Activated CD4-positive, alpha-beta T cell treated with anti-CD3 and anti-CD28 coated beads for 36 hours (primary cell): ENCODE measurements at regions of chr2 and their contacts with region 1.

Region 1: DNA sequence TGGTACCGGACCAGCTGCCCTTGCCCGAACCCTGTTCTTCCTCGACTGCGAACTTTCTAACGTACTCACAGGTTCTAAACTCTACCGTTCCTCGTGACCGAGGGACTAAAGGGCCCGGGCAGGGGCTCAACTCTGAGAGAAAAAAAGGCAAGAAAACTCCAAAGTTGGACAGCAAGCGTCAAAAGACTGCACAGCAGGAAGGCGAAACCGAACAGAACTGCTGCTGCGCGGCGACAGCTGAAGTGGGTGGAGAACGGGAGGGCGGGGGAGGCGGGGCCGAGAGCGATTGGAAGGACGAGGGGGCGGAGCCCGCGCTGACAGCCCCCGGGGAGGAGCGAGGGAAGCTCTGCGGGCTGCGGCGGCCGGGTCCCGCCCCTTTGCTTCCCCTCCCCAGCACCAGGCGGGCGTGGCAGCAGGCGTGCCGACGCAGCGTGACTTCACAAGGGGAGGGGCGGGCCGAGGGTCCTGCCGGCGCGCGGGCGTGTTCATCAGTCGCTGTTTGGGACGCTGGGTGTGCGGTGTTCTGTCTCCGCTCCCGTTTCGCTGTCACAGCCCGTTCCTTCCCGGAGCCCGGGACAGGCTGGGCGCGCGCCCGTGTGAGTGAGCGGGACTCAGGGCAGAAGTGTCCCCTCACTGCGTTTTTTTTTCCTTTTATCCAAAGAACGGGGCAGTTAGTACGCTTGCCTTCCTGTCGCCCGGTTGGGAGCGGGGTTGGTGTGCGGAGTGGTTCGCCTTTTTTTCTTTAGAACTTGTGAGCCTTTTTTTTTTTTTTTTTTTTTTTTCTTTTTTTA is at the start of gene NABP1:
- DNase-seq: peak; percentile 100
- ATAC-seq: peak; percentile 79
- H3K4me3 Mint-ChIP-seq: peak within 1 kb of the TSS; percentile 97
- H3K27ac Mint-ChIP-seq: peak within 1 kb of the TSS; percentile 99
- H3K4me1 Mint-ChIP-seq: peaks cover 45% of the 10 kb centered on the region
- H3K27me3 Mint-ChIP-seq: no peaks in the 10 kb centered on the region
- total RNA-seq, gene NABP1: 52.4 to 53.9 TPM

Region 2: DNA sequence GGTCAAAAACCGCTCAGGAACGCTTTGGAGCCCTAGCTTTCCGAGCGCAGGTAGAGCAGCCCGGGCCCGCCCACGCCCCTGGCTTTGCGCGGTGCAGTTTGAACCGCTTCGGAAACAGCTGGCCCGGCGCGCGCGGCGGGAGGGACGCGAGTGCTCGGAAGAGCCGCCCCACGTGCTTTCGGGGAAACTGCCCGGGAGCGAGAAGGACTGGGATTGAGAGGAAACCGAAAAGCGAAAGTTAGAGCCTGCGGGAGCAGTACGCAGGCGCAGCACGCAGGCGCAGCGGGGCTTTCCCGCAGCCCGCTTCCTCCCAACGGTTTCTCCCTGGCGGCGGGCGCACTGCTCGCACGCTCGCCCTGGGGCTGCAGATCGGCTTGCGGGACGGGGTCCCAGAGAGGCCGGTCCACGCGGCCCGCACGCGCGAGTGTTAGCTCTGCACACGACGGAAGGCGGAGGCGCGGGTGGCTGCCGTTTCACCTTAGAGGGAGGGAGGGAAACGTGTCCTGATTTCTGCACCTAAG is 657.6 kb before region 1 on chr2:
- CTCF ChIA-PET with region 1: no interaction called
- POLR2A ChIA-PET with region 1: no interaction called
- intact Hi-C with region 1: loop called (anchors 2 to 5 kb)
- DNase-seq: peak; percentile 96
- ATAC-seq: peak; percentile 62
- H3K4me3 Mint-ChIP-seq: no peak overlapping the region
- H3K27ac Mint-ChIP-seq: no peak overlapping the region
- H3K4me1 Mint-ChIP-seq: peaks cover 37% of the 10 kb centered on the region
- H3K27me3 Mint-ChIP-seq: no peaks in the 10 kb centered on the region

Region 3: DNA sequence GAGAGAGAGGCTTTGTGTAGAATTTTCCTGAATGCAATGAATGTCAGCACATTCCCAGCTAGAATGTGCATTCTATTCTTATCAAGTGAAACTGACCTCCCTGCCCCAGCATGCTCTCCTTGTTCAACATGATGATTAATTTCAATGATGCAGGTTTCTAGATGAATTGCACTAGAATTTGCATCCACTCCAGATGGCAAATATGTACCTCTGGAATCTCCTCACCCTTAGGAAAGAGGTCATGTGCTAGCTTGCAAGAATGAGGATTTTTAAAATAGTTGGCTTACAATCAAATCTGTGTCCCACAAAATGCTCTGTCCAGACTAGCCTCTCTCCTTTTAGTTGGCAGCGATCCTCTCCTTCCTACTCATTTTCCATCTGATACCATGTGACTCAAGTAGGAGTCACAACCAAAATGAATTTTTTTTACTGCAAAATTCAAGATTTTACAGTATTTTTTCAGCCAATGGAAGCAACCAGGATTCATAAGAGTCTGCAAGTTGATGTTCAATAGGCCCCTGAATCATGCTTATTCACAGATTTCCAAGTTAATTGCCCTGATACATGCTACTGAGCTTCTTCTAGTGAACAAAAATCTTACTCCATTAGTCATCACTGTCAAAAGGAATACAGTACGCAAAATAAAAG is 506.0 kb before region 1 on chr2:
- CTCF ChIA-PET with region 1: no interaction called
- POLR2A ChIA-PET with region 1: interaction called, 4 read pairs
- intact Hi-C with region 1: loop called in 1 of 2 experiments (anchors 5 kb)
- DNase-seq: peak; percentile 48
- ATAC-seq: peak; percentile 56
- H3K4me3 Mint-ChIP-seq: no peak overlapping the region
- H3K27ac Mint-ChIP-seq: peak overlapping the region; percentile 60
- H3K4me1 Mint-ChIP-seq: peaks cover 78% of the 10 kb centered on the region
- H3K27me3 Mint-ChIP-seq: no peaks in the 10 kb centered on the region

Region 4: GRCh38 chr2:191573216-191573615 is 104.6 kb before region 1 on chr2:
- CTCF ChIA-PET with region 1: interaction called, 3 read pairs
- POLR2A ChIA-PET with region 1: interaction called, 4 read pairs
- intact Hi-C with region 1: loop called (anchors 1 to 2 kb)
- DNase-seq: no peak
- ATAC-seq: peak; percentile 52
- H3K4me3 Mint-ChIP-seq: no peak overlapping the region
- H3K27ac Mint-ChIP-seq: peak overlapping the region; percentile 85
- H3K4me1 Mint-ChIP-seq: peaks cover 49% of the 10 kb centered on the region
- H3K27me3 Mint-ChIP-seq: no peaks in the 10 kb centered on the region

Region 5: DNA sequence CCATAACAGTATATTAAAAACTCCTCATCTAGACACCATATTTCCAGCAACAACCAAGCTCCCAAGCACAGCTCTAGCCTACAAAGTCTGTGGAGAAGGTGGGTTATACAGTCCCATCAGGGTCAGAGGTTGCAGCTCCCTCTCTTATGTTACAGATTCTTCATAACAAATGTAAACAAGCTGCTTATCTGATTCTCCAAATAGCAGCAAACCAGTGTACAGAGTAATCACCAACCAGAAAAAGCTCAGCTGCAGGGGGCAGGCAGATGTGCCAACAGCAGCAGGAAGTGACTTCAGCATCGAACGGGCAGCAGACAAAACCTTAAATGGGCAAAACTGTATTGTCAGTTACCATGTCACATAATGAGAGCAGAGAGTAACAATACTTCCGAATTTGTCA is 52.8 kb before region 1 on chr2:
- CTCF ChIA-PET with region 1: interaction called, 4 read pairs
- POLR2A ChIA-PET with region 1: interaction called, 6 read pairs
- intact Hi-C with region 1: loop called in 1 of 2 experiments (anchors 1 kb)
- DNase-seq: peak; percentile 64
- ATAC-seq: peak; percentile 57
- H3K4me3 Mint-ChIP-seq: no peak overlapping the region
- H3K27ac Mint-ChIP-seq: peak overlapping the region; percentile 86
- H3K4me1 Mint-ChIP-seq: peaks cover 69% of the 10 kb centered on the region
- H3K27me3 Mint-ChIP-seq: no peaks in the 10 kb centered on the region

Region 6: DNA sequence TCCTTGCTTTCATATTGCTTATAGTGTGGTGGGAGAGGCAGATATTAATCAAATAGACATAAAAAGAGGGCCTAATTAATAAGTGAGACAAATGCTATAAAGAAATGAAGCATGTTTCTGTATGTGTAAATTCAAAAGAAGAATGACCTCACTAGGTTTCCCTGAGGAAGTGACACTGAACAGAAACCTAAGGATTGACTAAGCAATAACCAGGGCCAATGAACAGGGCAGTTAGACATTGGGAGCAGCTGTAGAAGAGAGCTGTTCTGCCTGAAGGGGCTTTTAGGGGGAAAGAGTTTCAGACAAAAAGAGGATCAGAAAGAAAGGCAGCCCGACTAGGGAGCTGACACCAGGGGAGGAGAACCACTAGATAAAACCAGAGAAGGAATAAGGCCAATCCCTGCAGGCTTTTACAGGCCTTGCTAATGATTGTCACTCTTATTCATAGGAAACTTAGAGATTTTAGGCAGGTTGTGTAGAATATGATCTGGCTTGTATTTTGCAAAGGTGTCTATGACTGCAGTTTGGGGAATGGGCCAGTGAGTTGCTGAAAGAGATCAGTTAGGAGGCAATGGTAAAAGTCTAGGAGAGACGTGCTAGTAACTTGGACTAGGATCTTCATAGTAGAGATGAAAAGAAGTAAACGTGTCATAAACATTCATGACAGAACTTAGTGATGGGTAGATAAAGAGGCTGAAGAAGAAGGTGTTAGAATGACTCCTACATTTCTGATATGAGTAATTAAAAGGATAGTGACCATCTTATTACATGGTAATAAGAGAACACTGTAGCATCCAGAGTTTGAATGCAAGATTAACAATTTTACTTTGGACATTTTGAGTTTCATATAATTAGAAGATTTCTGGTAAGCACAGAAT is 26.7 kb before region 1 on chr2:
- CTCF ChIA-PET with region 1: interaction called, 3 read pairs
- POLR2A ChIA-PET with region 1: interaction called, 3 read pairs
- intact Hi-C with region 1: loop called in 1 of 2 experiments (anchors 1 kb)
- DNase-seq: peak; percentile 12
- ATAC-seq: peak; percentile 91
- H3K4me3 Mint-ChIP-seq: no peak overlapping the region
- H3K27ac Mint-ChIP-seq: peak overlapping the region; percentile 21
- H3K4me1 Mint-ChIP-seq: peaks cover 15% of the 10 kb centered on the region
- H3K27me3 Mint-ChIP-seq: no peaks in the 10 kb centered on the region

Region 7: DNA sequence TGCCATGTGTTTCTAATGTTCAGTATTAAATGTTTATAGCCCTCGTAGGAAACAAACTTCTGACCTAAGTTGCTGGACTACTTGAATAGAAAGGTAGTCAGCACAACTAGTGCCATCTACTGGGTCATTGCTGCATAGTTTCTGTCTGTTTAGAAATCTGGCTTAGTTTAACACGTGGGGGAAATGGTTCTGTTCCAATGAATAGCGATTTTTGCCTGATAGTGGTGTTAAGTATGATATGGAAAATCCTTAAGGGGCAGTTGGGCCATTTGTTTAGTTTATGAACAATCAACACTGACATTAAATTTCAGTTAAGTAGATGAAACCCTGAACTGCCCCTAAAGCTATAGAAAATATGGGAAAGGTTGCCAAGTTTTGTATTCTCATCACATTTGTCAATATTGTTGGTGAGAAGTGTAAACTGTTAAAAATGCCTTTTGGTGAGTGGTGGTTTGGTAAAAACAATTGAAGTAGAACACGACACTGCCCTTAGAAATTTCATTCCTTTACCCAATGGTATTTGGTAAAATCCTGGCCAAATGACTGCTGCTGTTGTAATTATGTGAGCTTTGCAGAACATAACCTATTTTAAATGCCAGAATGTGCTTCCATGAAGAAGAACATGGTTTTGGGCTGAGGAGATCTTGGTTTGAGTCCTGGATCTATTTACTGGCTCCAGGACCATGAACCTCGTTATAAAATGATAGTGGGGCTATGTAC is 13.3 kb after region 1 on chr2:
- CTCF ChIA-PET with region 1: interaction called, 8 read pairs
- POLR2A ChIA-PET with region 1: interaction called, 13 read pairs
- intact Hi-C with region 1: loop called (anchors 1 kb)
- DNase-seq: peak; percentile 58
- ATAC-seq: peak; percentile 43
- H3K4me3 Mint-ChIP-seq: peak overlapping the region; percentile 25
- H3K27ac Mint-ChIP-seq: peak overlapping the region; percentile 77
- H3K4me1 Mint-ChIP-seq: peaks cover 56% of the 10 kb centered on the region
- H3K27me3 Mint-ChIP-seq: no peaks in the 10 kb centered on the region

Region 8: GRCh38 chr2:191783416-191783815 is 105.6 kb after region 1 on chr2:
- CTCF ChIA-PET with region 1: no interaction called
- POLR2A ChIA-PET with region 1: no interaction called
- intact Hi-C with region 1: no loop called
- DNase-seq: no peak
- ATAC-seq: no peak
- H3K4me3 Mint-ChIP-seq: no peak overlapping the region
- H3K27ac Mint-ChIP-seq: no peak overlapping the region
- H3K4me1 Mint-ChIP-seq: no peaks in the 10 kb centered on the region
- H3K27me3 Mint-ChIP-seq: peaks cover 8% of the 10 kb centered on the region